Activated naive CD4-positive, alpha-beta T cell treated with anti-CD3 and anti-CD28 coated beads for 36 hours (primary cell): ENCODE measurements at regions of chr17 and their contacts with region 1.

Region 1: DNA sequence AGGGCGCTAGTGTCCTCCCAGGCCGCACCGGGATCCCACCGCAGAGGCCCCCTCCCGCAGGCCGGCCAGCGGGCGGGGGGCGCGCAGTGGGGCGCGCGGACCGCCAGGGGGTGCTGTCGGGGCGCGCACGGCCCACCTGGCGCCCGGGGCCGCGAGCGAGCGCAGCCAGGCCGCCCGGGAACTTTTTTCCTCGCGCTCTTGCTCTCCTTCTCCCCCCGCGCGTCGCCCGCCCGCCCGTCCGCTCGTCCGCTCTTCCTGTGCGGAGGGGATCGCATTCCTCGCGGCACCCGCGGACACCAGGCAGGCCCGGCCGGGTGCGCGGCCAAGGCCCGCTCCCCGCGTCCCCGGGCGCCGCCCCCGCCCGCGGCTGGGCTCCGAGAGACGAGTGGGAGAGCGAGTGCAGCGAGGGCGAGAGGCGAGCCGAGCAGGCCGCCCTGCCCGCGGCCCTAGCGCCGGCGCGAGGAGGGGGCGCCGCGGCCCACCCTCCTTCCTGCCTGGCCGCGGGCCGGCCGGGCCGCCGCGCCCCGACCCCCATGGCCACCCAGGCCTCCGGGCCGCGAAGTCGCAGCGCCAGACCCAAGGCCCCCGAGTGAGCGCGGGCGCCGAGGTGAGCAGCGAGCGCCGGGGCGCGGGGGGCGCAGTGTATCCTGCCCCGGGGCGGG is at the start of gene RAI1:
- DNase-seq: peak; percentile 66
- H3K4me3 Mint-ChIP-seq: peak within 1 kb of the TSS; percentile 88
- H3K27ac Mint-ChIP-seq: peak within 1 kb of the TSS; percentile 87
- H3K4me1 Mint-ChIP-seq: peaks cover 30% of the 10 kb centered on the region
- H3K27me3 Mint-ChIP-seq: no peaks in the 10 kb centered on the region
- total RNA-seq, gene RAI1: 9.2 to 12.0 TPM

Region 2: GRCh38 chr17:16329519-16330271 is 1351.6 kb before region 1 on chr17:
- CTCF ChIA-PET with region 1: no interaction called
- intact Hi-C with region 1: no loop called
- DNase-seq: no peak
- H3K4me3 Mint-ChIP-seq: no peak overlapping the region
- H3K27ac Mint-ChIP-seq: no peak overlapping the region
- H3K4me1 Mint-ChIP-seq: no peaks in the 10 kb centered on the region
- H3K27me3 Mint-ChIP-seq: no peaks in the 10 kb centered on the region

Region 3: GRCh38 chr17:17391668-17392370 is 289.5 kb before region 1 on chr17:
- CTCF ChIA-PET with region 1: no interaction called
- intact Hi-C with region 1: no loop called
- DNase-seq: peak; percentile 82
- H3K4me3 Mint-ChIP-seq: peak overlapping the region; percentile 74
- H3K27ac Mint-ChIP-seq: no peak overlapping the region
- H3K4me1 Mint-ChIP-seq: peaks cover 15% of the 10 kb centered on the region
- H3K27me3 Mint-ChIP-seq: no peaks in the 10 kb centered on the region

Region 4: GRCh38 chr17:17661134-17661533 is 20.2 kb before region 1 on chr17:
- CTCF ChIA-PET with region 1: no interaction called
- intact Hi-C with region 1: no loop called
- DNase-seq: no peak
- H3K4me3 Mint-ChIP-seq: no peak overlapping the region
- H3K27ac Mint-ChIP-seq: no peak overlapping the region
- H3K4me1 Mint-ChIP-seq: peaks cover 11% of the 10 kb centered on the region
- H3K27me3 Mint-ChIP-seq: no peaks in the 10 kb centered on the region

Region 5: DNA sequence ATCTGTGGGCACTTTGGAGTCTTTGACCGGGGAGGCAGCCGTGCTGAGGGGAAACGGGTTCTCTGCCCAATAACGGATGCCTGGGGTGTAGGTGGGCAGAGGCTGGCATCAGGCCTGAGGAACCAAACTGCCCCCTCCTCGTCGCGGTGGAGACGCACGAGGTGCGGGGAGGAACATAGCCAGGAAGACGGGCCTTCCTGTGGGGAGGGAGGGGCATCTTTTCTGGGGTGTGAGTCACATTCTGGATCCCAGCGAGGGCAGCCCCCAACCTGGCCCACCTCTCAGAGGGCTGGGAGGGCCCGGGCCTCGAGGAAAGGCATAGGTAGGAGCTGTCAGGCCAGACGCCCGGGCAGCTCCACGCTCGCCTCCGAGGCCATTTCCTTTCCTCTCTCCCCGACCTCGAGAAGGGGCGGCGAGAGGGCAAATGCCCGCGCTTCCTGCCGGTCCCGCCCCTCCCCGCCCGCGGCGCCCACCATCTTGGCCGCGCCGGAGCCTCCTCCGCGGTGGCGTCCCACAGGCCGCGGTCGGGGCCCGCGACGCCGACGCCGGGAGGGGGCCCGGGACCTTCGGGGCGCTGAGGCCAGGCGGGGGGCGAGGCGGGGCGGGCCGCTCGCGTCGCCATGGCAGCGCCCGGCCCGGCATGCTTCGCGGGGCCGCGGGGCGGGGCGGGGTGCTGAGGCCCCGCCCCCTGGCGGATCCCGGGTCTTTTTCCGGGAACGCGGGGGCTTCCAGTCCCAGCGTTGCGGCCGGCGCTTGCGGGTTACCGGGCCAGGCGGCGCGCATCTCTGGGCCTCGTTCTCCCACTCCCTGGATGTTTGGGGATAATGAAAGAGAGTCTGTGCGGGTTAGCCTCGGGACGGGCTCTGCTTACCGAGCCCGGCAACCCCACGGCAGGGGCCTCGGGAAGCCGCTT is 13.1 kb after region 1 on chr17:
- CTCF ChIA-PET with region 1: interaction called, 6 read pairs
- intact Hi-C with region 1: loop called (anchors 1 kb)
- DNase-seq: peak; percentile 80
- H3K4me3 Mint-ChIP-seq: peak overlapping the region; percentile 90
- H3K27ac Mint-ChIP-seq: peak overlapping the region; percentile 97
- H3K4me1 Mint-ChIP-seq: peaks cover 71% of the 10 kb centered on the region
- H3K27me3 Mint-ChIP-seq: no peaks in the 10 kb centered on the region

Region 6: GRCh38 chr17:17752089-17752820 is 70.9 kb after region 1 on chr17:
- CTCF ChIA-PET with region 1: no interaction called
- intact Hi-C with region 1: loop called (anchors 1 kb)
- DNase-seq: peak; percentile 97
- H3K4me3 Mint-ChIP-seq: peak overlapping the region; percentile 92
- H3K27ac Mint-ChIP-seq: peak overlapping the region; percentile 98
- H3K4me1 Mint-ChIP-seq: peaks cover 71% of the 10 kb centered on the region
- H3K27me3 Mint-ChIP-seq: no peaks in the 10 kb centered on the region

Region 7: DNA sequence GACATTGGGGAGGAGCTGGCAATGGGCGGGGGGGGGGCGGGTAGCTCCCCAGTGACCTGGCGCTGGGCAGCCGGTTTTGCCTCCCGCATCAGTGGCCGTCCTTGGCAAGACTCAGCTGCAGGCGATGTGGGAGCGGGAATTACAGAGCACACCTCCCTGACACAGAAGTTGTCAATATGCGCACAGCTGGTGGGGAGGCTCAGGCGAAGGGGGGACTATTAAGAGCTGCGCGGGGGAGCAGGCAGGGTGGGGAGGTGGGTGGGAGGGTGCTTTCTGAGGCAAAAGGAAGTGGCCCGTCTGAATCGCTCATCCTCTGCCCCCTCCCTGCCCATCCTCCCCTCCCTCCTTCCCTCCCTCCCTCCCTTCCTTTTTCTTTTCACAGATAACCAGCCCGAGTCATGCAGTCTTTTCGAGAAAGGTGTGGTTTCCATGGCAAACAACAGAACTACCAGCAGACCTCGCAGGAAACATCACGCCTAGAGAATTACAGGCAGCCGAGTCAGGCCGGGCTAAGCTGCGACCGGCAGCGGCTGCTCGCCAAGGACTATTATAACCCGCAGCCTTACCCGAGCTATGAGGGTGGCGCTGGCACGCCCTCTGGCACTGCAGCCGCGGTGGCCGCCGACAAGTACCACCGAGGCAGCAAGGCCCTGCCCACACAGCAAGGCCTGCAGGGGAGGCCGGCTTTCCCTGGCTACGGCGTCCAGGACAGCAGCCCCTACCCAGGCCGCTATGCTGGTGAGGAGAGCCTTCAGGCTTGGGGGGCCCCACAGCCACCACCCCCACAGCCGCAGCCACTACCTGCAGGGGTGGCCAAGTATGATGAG is 111.4 kb after region 1 on chr17:
- CTCF ChIA-PET with region 1: interaction called, 3 read pairs
- intact Hi-C with region 1: loop called (anchors 1 kb)
- DNase-seq: peak; percentile 82
- H3K4me3 Mint-ChIP-seq: no peak overlapping the region
- H3K27ac Mint-ChIP-seq: peak overlapping the region; percentile 37
- H3K4me1 Mint-ChIP-seq: peaks cover 20% of the 10 kb centered on the region
- H3K27me3 Mint-ChIP-seq: no peaks in the 10 kb centered on the region

Region 8: GRCh38 chr17:17849845-17850373 is 168.6 kb after region 1 on chr17:
- CTCF ChIA-PET with region 1: interaction called, 9 read pairs
- intact Hi-C with region 1: loop called (anchors 1 kb)
- DNase-seq: peak; percentile 94
- H3K4me3 Mint-ChIP-seq: peak overlapping the region; percentile 41
- H3K27ac Mint-ChIP-seq: peak overlapping the region; percentile 95
- H3K4me1 Mint-ChIP-seq: peaks cover 78% of the 10 kb centered on the region
- H3K27me3 Mint-ChIP-seq: no peaks in the 10 kb centered on the region

Region 9: GRCh38 chr17:17919169-17920107 is 238.1 kb after region 1 on chr17:
- CTCF ChIA-PET with region 1: interaction called, 20 read pairs
- intact Hi-C with region 1: loop called (anchors 2 kb)
- DNase-seq: peak; percentile 82
- H3K4me3 Mint-ChIP-seq: no peak overlapping the region
- H3K27ac Mint-ChIP-seq: no peak overlapping the region
- H3K4me1 Mint-ChIP-seq: peaks cover 16% of the 10 kb centered on the region
- H3K27me3 Mint-ChIP-seq: no peaks in the 10 kb centered on the region

Region 10: GRCh38 chr17:18033442-18034099 is 352.3 kb after region 1 on chr17:
- CTCF ChIA-PET with region 1: interaction called, 3 read pairs
- intact Hi-C with region 1: loop called (anchors 1 kb)
- DNase-seq: peak; percentile 74
- H3K4me3 Mint-ChIP-seq: no peak overlapping the region
- H3K27ac Mint-ChIP-seq: no peak overlapping the region
- H3K4me1 Mint-ChIP-seq: peaks cover 33% of the 10 kb centered on the region
- H3K27me3 Mint-ChIP-seq: no peaks in the 10 kb centered on the region